ENCODE measurements at regions of chr1 and their contacts with region 1.

Region 1: GRCh38 chr1:3772027-3772714 is 378 bp upstream of the SMIM1 start:
- DNase-seq: peak; percentile 62
- ATAC-seq: peak; percentile 83
- H3K4me3 ChIP-seq: peak overlapping the region; percentile 82
- H3K27ac ChIP-seq: no peak overlapping the region; the same call in 1 of the 2 replicates
- H3K4me1 ChIP-seq: peaks cover 18% of the 10 kb centered on the region
- H3K27me3 ChIP-seq: no peaks in the 10 kb centered on the region
- CTCF ChIP-seq: no peak
- POLR2A ChIP-seq: no peak
- RAD21 ChIP-seq: no peak

Region 2: GRCh38 chr1:3746830-3747521 is 25.2 kb before region 1 on chr1:
- CTCF ChIA-PET with region 1: no interaction called
- POLR2A ChIA-PET with region 1: no interaction called
- dilution Hi-C with region 1: no loop called
- in situ Hi-C with region 1: no loop called
- intact Hi-C with region 1: loop called (anchors 2 kb)
- DNase-seq: peak; percentile 55
- ATAC-seq: peak; percentile 99
- H3K4me3 ChIP-seq: peak overlapping the region; percentile 63
- H3K27ac ChIP-seq: no peak overlapping the region; the same call in 1 of the 2 replicates
- H3K4me1 ChIP-seq: peaks cover 8% of the 10 kb centered on the region; the same call in 1 of the 2 replicates
- H3K27me3 ChIP-seq: peaks cover 11% of the 10 kb centered on the region
- CTCF ChIP-seq: no peak
- POLR2A ChIP-seq: peak; percentile 37; the same call in 1 of the 2 replicates
- RAD21 ChIP-seq: no peak

Measured in IMR-90 (cell line).